ENCODE measurements at regions of chr7 and their contacts with region 1.

Region 1: GRCh38 chr7:24381894-24382505 is 98.0 kb downstream of the NPY start:
- DNase-seq: no peak
- H3K4me3 ChIP-seq: no peak overlapping the region
- H3K27ac ChIP-seq: 0 out of 2 replicates have a peak overlapping the region, but pooled peaks have one; percentile 16
- H3K4me1 ChIP-seq: peaks cover 0 to 23% (median 9%) of the 10 kb centered on the region in 4 experiments; a peak in 5 of 7 replicates
- H3K27me3 ChIP-seq: no peaks in the 10 kb centered on the region
- CTCF ChIP-seq: peak in 2 of 3 experiments; percentile 18 to 48; a peak in 2 of 4 replicates
- EP300 ChIP-seq: no peak
- POLR2A ChIP-seq: no peak
- RAD21 ChIP-seq: peak; percentile 53 to 60

Region 2: DNA sequence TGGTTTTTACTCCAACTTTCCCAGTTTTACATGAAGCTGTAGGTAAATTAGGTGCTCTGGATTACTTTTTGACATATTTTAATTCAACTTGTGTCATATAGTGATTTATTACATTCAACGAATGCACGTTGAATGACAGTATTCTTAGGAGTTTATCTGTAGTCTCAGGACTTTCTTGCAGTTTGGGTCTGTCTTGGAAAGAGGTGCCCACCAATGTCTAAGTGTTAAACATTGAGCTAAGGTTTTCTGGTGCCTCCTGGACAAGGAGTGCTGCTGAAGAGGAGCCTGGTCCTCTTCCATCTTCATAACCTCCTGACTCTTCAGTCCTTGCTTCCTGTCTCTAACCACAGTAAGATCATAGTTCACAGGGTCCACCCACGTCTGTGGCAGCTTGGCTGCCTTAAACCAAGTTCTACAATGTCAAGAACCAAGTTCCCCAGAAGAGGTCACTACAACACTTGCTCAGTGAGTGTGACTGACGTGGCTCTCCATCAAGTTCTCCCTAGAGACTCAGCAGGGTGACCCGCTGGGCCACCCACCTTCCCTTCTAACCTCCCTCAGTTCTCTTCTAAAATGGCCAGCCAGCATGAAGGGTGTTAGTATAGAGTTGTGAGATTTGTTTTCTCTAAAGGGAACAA is 91.9 kb before region 1 on chr7:
- CTCF ChIA-PET with region 1: interaction called, 12 read pairs
- POLR2A ChIA-PET with region 1: interaction called, 3 read pairs
- DNase-seq: peak in 1 of 2 experiments; percentile 53
- H3K4me3 ChIP-seq: no peak overlapping the region
- H3K27ac ChIP-seq: no peak overlapping the region
- H3K4me1 ChIP-seq: peaks cover 0 to 4% (median 1%) of the 10 kb centered on the region in 4 experiments; a peak in 3 of 7 replicates
- H3K27me3 ChIP-seq: peaks cover under 1 to 9% (median 6%) of the 10 kb centered on the region in 4 experiments; a peak in 6 of 7 replicates
- CTCF ChIP-seq: peak; percentile 17 to 79 (median 62)
- EP300 ChIP-seq: no peak
- POLR2A ChIP-seq: no peak
- RAD21 ChIP-seq: peak; percentile 91 to 92

Region 3: GRCh38 chr7:24318326-24318725 is 63.7 kb before region 1 on chr7:
- CTCF ChIA-PET with region 1: interaction called, 19 read pairs
- POLR2A ChIA-PET with region 1: interaction called, 4 read pairs
- DNase-seq: peak in 1 of 2 experiments; percentile 10
- H3K4me3 ChIP-seq: no peak overlapping the region
- H3K27ac ChIP-seq: no peak overlapping the region
- H3K4me1 ChIP-seq: peaks cover 0 to 6% (median 2%) of the 10 kb centered on the region in 4 experiments; a peak in 2 of 7 replicates
- H3K27me3 ChIP-seq: no peaks in the 10 kb centered on the region
- CTCF ChIP-seq: peak; percentile 75 to 94 (median 78)
- EP300 ChIP-seq: no peak
- POLR2A ChIP-seq: no peak
- RAD21 ChIP-seq: peak; percentile 96 to 97

Region 4: GRCh38 chr7:24336461-24336860 is 45.5 kb before region 1 on chr7:
- CTCF ChIA-PET with region 1: interaction called, 23 read pairs
- POLR2A ChIA-PET with region 1: interaction called, 4 read pairs
- DNase-seq: no peak
- H3K4me3 ChIP-seq: peak overlapping the region in 1 of 4 experiments; percentile 36; a peak in 1 of 8 replicates
- H3K27ac ChIP-seq: no peak overlapping the region
- H3K4me1 ChIP-seq: peaks cover 1 to 20% (median 16%) of the 10 kb centered on the region in 4 experiments; a peak in 6 of 7 replicates
- H3K27me3 ChIP-seq: peaks cover 0 to 13% (median 6%) of the 10 kb centered on the region in 4 experiments; a peak in 6 of 7 replicates
- CTCF ChIP-seq: no peak
- EP300 ChIP-seq: no peak
- POLR2A ChIP-seq: no peak
- RAD21 ChIP-seq: no peak

Region 5: DNA sequence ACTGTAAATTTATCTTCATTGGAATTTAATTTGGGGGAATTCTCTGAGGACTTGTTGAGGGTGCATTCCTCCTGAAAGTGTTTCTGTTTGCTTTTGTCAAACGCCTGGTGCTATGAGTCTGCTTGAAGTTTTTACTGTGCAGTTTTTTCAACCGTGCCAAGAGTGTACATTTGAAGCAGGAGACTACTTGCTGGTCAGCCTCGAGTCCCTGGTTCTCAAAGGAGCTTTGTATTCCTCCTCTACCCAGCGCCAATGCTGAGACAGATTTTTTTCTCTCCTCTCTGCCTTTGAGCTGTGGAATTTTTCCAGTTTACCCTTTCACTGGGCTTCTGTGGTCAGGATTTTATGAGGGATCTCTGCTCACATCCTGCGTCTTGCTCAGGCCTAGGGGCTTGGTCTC is 35.9 kb before region 1 on chr7:
- CTCF ChIA-PET with region 1: interaction called, 18 read pairs
- POLR2A ChIA-PET with region 1: interaction called, 3 read pairs
- DNase-seq: no peak
- H3K4me3 ChIP-seq: no peak overlapping the region
- H3K27ac ChIP-seq: no peak overlapping the region
- H3K4me1 ChIP-seq: peaks cover 0 to 11% (median 3%) of the 10 kb centered on the region in 4 experiments; a peak in 3 of 7 replicates
- H3K27me3 ChIP-seq: no peaks in the 10 kb centered on the region
- CTCF ChIP-seq: no peak
- EP300 ChIP-seq: no peak
- POLR2A ChIP-seq: no peak
- RAD21 ChIP-seq: no peak

Region 6: DNA sequence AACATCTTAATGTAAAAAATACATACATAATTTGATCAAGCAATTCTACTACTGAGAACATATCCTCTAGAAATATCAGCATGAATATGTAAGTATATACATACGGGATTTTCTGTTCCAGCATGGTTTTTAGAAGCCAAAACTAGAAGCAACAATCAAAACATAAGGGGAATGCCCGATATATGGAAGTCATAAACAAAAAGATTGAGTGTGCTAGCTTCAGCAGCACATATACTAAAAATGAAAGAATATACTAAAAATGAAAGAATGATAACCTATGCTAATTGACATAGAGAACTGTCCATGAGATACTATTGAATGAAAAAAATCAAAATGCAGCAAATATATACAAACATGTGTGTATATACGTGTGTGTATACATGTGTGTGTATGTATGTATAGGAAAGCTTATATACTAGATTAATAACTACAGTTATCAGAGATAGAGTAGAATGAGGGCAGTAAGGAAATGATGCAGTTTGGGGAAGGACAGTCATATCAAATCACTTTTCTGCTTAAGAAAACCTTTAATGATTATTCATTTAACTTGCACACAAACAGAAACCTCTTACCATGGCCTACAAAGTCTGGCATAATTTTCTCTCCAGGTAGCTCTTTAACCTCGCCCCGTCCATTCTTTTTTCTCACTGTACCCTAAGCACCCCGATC is 25.1 kb before region 1 on chr7:
- CTCF ChIA-PET with region 1: interaction called, 11 read pairs
- POLR2A ChIA-PET with region 1: interaction called, 6 read pairs
- DNase-seq: no peak
- H3K4me3 ChIP-seq: no peak overlapping the region
- H3K27ac ChIP-seq: no peak overlapping the region
- H3K4me1 ChIP-seq: no peaks in the 10 kb centered on the region
- H3K27me3 ChIP-seq: no peaks in the 10 kb centered on the region
- CTCF ChIP-seq: no peak
- EP300 ChIP-seq: no peak
- POLR2A ChIP-seq: no peak
- RAD21 ChIP-seq: no peak

Region 7: GRCh38 chr7:24395512-24395911 is 13.5 kb after region 1 on chr7:
- CTCF ChIA-PET with region 1: interaction called, 28 read pairs
- POLR2A ChIA-PET with region 1: interaction called, 20 read pairs
- DNase-seq: no peak
- H3K4me3 ChIP-seq: peak overlapping the region in 1 of 4 experiments; percentile 67; a peak in 1 of 8 replicates
- H3K27ac ChIP-seq: peak overlapping the region; percentile 54
- H3K4me1 ChIP-seq: peaks cover 1 to 27% (median 15%) of the 10 kb centered on the region in 4 experiments; a peak in 6 of 7 replicates
- H3K27me3 ChIP-seq: no peaks in the 10 kb centered on the region
- CTCF ChIP-seq: no peak
- EP300 ChIP-seq: no peak
- POLR2A ChIP-seq: no peak
- RAD21 ChIP-seq: no peak

Measured in H1 (cell line).